SK-N-SH (cell line): ENCODE measurements at regions of chr2 and their contacts with region 1.

Region 1: GRCh38 chr2:145752091-145752806 is 1232.3 kb upstream of the ZEB2 start:
- DNase-seq: peak; percentile 22
- H3K4me3 ChIP-seq: no peak overlapping the region; a peak in 1 of 4 replicates
- H3K27ac ChIP-seq: peak overlapping the region in 1 of 2 experiments; percentile 64; a peak in 2 of 4 replicates
- H3K4me1 ChIP-seq: peaks cover 4 to 13% of the 10 kb centered on the region in 2 experiments; a peak in 3 of 4 replicates
- H3K27me3 ChIP-seq: no peaks in the 10 kb centered on the region
- CTCF ChIP-seq: peak; percentile 80
- EP300 ChIP-seq: no peak
- RAD21 ChIP-seq: peak; percentile 91

Region 2: GRCh38 chr2:145593832-145594614 is 158.2 kb before region 1 on chr2:
- CTCF ChIA-PET with region 1: no interaction called
- POLR2A ChIA-PET with region 1: no interaction called
- DNase-seq: no peak
- H3K4me3 ChIP-seq: no peak overlapping the region
- H3K27ac ChIP-seq: peak overlapping the region; percentile 25 to 90; a peak in 3 of 4 replicates
- H3K4me1 ChIP-seq: peaks cover 0 to 38% of the 10 kb centered on the region in 2 experiments; a peak in 3 of 4 replicates
- H3K27me3 ChIP-seq: no peaks in the 10 kb centered on the region
- CTCF ChIP-seq: peak; percentile 51
- EP300 ChIP-seq: peak in 1 of 2 experiments; percentile 73; a peak in 2 of 4 replicates
- RAD21 ChIP-seq: peak; percentile 33; the same call in 1 of the 2 replicates

Region 3: DNA sequence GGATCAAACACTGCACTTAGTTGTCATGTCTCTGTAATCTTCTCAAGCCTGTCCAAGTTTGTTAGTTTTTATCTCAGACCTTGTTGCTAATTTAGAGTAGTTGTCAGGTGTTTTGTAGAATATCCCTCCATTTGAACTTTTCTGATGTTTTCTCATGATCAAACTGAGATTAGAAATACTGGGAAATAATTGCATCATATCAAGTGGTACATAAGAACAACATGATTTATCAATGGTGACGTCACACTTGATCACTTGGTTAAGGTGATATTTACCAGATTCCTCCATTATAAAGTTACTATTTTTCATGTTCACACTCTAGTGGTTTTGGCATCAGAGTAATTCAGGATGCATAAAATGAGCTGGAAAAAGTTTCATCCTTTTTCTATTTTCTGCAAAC is 49.9 kb before region 1 on chr2:
- CTCF ChIA-PET with region 1: no interaction called
- POLR2A ChIA-PET with region 1: no interaction called
- DNase-seq: no peak
- H3K4me3 ChIP-seq: no peak overlapping the region
- H3K27ac ChIP-seq: no peak overlapping the region
- H3K4me1 ChIP-seq: no peaks in the 10 kb centered on the region
- H3K27me3 ChIP-seq: no peaks in the 10 kb centered on the region
- CTCF ChIP-seq: no peak
- EP300 ChIP-seq: no peak
- RAD21 ChIP-seq: no peak

Region 4: GRCh38 chr2:145764631-145765030 is 12.4 kb after region 1 on chr2:
- CTCF ChIA-PET with region 1: interaction called, 16 read pairs
- POLR2A ChIA-PET with region 1: no interaction called
- DNase-seq: no peak
- H3K4me3 ChIP-seq: no peak overlapping the region
- H3K27ac ChIP-seq: no peak overlapping the region
- H3K4me1 ChIP-seq: no peaks in the 10 kb centered on the region
- H3K27me3 ChIP-seq: no peaks in the 10 kb centered on the region
- CTCF ChIP-seq: no peak
- EP300 ChIP-seq: no peak
- RAD21 ChIP-seq: no peak

Region 5: DNA sequence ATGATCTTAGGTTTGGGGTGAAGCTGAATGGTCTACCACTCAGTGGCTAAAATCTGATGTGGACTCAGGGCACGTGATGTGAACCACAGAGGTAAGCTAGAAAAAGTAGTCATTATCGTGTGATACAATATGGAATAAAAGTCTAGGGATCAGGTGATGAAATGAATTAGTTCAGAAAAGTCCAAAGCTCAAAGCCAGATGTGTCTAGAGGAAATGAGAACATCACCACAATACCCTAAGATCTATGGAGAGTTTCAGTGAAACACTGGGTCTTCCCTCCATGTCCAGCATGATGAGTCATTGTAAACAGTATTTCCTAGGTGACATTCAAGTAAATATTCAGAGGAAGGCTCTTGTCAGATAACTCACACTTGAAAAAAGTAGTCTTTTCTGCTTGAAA is 25.0 kb after region 1 on chr2:
- CTCF ChIA-PET with region 1: no interaction called
- POLR2A ChIA-PET with region 1: no interaction called
- DNase-seq: no peak
- H3K4me3 ChIP-seq: no peak overlapping the region
- H3K27ac ChIP-seq: no peak overlapping the region
- H3K4me1 ChIP-seq: no peaks in the 10 kb centered on the region; a peak in 1 of 4 replicates
- H3K27me3 ChIP-seq: no peaks in the 10 kb centered on the region
- CTCF ChIP-seq: no peak
- EP300 ChIP-seq: no peak
- RAD21 ChIP-seq: no peak